ENCODE measurements at regions of chr2 and their contacts with region 1.

Region 1: DNA sequence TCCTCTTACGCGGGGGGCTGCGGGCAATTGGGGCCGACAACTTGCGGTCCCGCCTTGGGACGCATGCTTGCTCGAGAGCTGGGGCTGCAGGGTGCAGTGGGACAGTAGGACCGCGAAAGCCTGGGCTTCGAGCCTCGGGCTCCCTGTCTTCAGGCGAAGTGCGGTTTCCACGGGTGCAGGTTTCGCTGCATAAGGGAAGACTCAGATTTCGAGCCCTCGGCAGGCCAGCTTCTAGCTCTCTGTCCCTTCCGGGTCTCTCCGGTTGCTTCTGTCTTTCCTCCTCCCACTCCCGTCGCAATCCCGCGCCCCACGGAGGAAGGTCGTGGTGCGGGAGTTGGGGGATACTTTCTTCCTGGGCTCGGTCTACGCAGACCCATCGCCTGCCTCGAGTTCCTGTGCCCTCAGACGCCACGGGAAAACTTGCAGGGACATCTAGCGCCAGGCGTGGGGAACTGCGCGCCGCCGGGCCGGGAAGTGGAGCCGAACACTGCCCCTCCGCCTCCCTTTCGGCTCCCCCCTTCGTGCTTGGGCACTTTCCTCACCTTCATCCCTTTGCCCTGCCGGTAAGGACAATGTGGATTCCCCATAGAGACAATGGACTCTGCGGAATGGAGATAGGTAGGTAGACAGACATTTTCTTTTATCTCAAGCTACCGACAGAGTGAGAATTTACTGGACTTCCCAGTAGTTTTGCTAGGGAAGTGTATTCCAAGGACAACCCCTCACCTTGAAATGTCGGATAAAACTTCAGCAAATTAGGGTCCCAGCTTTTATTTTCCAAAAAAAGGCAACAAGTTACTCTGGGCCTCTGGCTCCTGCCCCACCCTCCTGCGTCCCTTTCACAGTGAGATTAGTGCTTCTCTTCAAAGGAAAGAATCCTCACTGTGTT is 4.2 kb upstream of the HOXD13 start:
- DNase-seq: peak; percentile 66
- H3K4me3 Mint-ChIP-seq: peak overlapping the region; percentile 60
- H3K27ac Mint-ChIP-seq: peak overlapping the region; percentile 23
- H3K4me1 Mint-ChIP-seq: peaks cover 11% of the 10 kb centered on the region
- H3K27me3 Mint-ChIP-seq: peaks cover 86% of the 10 kb centered on the region
- CTCF ChIP-seq: peak; percentile 94

Region 2: GRCh38 chr2:175309799-175310198 is 778.5 kb before region 1 on chr2:
- CTCF ChIA-PET with region 1: interaction called, 8 read pairs
- POLR2A ChIA-PET with region 1: no interaction called
- intact Hi-C with region 1: loop called (anchors 1 kb)
- DNase-seq: peak; percentile 47
- H3K4me3 Mint-ChIP-seq: no peak overlapping the region
- H3K27ac Mint-ChIP-seq: no peak overlapping the region
- H3K4me1 Mint-ChIP-seq: peaks cover 5% of the 10 kb centered on the region
- H3K27me3 Mint-ChIP-seq: peaks cover 75% of the 10 kb centered on the region
- CTCF ChIP-seq: peak; percentile 33

Region 3: GRCh38 chr2:175366815-175367214 is 721.5 kb before region 1 on chr2:
- CTCF ChIA-PET with region 1: interaction called, 15 read pairs
- POLR2A ChIA-PET with region 1: interaction called, 4 read pairs
- intact Hi-C with region 1: loop called (anchors 1 kb)
- DNase-seq: peak; percentile 68
- H3K4me3 Mint-ChIP-seq: no peak overlapping the region
- H3K27ac Mint-ChIP-seq: no peak overlapping the region
- H3K4me1 Mint-ChIP-seq: no peaks in the 10 kb centered on the region
- H3K27me3 Mint-ChIP-seq: peaks cover 49% of the 10 kb centered on the region
- CTCF ChIP-seq: peak; percentile 73

Region 4: GRCh38 chr2:175372704-175373701 is 715.3 kb before region 1 on chr2:
- CTCF ChIA-PET with region 1: interaction called, 15 read pairs
- POLR2A ChIA-PET with region 1: no interaction called
- intact Hi-C with region 1: no loop called
- DNase-seq: no peak
- H3K4me3 Mint-ChIP-seq: no peak overlapping the region
- H3K27ac Mint-ChIP-seq: no peak overlapping the region
- H3K4me1 Mint-ChIP-seq: no peaks in the 10 kb centered on the region
- H3K27me3 Mint-ChIP-seq: peaks cover 31% of the 10 kb centered on the region
- CTCF ChIP-seq: no peak

Region 5: GRCh38 chr2:175414882-175415487 is 673.3 kb before region 1 on chr2:
- CTCF ChIA-PET with region 1: interaction called, 7 read pairs
- POLR2A ChIA-PET with region 1: no interaction called
- intact Hi-C with region 1: loop called (anchors 1 kb)
- DNase-seq: peak; percentile 87
- H3K4me3 Mint-ChIP-seq: no peak overlapping the region
- H3K27ac Mint-ChIP-seq: no peak overlapping the region
- H3K4me1 Mint-ChIP-seq: peaks cover 6% of the 10 kb centered on the region
- H3K27me3 Mint-ChIP-seq: no peaks in the 10 kb centered on the region
- CTCF ChIP-seq: peak; percentile 66

Region 6: DNA sequence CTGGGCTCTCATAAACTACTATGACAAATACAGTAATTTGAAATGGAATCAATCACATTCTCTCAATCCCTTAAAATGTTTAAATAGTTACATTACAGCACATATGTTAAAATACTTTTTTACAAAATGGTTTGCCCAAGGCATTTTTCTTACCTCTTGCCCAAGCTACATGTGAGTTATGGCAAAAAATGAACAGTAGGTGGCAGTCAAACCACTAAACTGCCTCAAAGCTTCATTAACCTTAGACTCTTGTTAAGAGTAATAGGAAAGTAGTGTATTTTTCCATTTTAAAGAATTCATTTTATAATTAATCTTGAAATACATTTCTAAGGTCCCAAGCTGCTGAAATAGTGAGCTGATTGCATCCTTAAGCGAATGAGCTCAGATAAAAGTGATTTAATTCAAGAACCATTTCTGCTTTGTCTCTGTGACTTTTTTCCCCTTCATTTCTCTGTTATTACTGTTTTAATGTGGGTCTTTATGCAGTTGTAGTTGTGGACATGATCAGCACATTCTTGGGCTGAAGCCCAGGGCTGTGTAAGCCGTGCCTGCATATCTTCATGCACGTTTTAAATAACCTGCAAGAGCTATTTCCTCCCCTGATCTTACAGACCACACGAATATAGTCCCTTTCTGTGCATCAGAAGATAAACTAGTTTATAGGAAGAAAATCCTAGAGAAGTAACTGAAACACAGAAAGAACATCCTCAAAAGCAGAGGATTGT is 398.0 kb before region 1 on chr2:
- CTCF ChIA-PET with region 1: interaction called, 65 read pairs
- POLR2A ChIA-PET with region 1: interaction called, 12 read pairs
- intact Hi-C with region 1: loop called (anchors 2 kb)
- DNase-seq: peak; percentile 74
- H3K4me3 Mint-ChIP-seq: no peak overlapping the region
- H3K27ac Mint-ChIP-seq: no peak overlapping the region
- H3K4me1 Mint-ChIP-seq: no peaks in the 10 kb centered on the region
- H3K27me3 Mint-ChIP-seq: peaks cover 44% of the 10 kb centered on the region
- CTCF ChIP-seq: peak; percentile 57

Region 7: DNA sequence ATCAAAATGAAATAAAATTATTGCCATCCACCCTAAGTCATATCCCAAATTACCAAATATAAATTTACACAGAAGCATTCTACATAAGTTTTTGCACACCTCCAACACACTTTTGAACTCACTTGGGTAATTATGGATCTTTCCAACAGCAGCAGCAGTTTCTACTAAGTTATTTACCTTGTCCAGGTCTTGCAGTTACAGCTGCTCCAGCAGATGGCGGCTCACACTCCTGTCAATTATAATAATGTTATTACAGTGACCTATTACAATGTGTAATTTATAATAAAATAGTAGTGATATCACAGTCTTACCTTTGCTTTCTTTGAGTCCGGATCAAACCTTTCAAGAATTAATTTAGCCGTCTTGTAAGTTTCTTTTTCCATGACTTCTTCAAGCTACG is 124.1 kb before region 1 on chr2:
- CTCF ChIA-PET with region 1: no interaction called
- POLR2A ChIA-PET with region 1: interaction called, 3 read pairs
- intact Hi-C with region 1: loop called (anchors 10 kb)
- DNase-seq: peak; percentile 9
- H3K4me3 Mint-ChIP-seq: no peak overlapping the region
- H3K27ac Mint-ChIP-seq: no peak overlapping the region
- H3K4me1 Mint-ChIP-seq: no peaks in the 10 kb centered on the region
- H3K27me3 Mint-ChIP-seq: no peaks in the 10 kb centered on the region
- CTCF ChIP-seq: peak; percentile 21

Region 8: GRCh38 chr2:176140513-176141317 is 52.4 kb after region 1 on chr2:
- CTCF ChIA-PET with region 1: no interaction called
- POLR2A ChIA-PET with region 1: no interaction called
- intact Hi-C with region 1: no loop called
- DNase-seq: peak; percentile 73
- H3K4me3 Mint-ChIP-seq: peak overlapping the region; percentile 57
- H3K27ac Mint-ChIP-seq: no peak overlapping the region
- H3K4me1 Mint-ChIP-seq: no peaks in the 10 kb centered on the region
- H3K27me3 Mint-ChIP-seq: no peaks in the 10 kb centered on the region
- CTCF ChIP-seq: peak; percentile 96